ENCODE measurements at regions of chr1 and their contacts with region 1.

Region 1: GRCh38 chr1:110460253-110461220 is 9.6 kb downstream of the PROK1 start:
- DNase-seq: peak; percentile 50
- H3K4me3 ChIP-seq: no peak overlapping the region
- H3K27ac ChIP-seq: no peak overlapping the region
- H3K27me3 ChIP-seq: peaks cover 7% of the 10 kb centered on the region
- CTCF ChIP-seq: peak; percentile 98

Region 2: GRCh38 chr1:110190282-110190929 is 270.1 kb before region 1 on chr1:
- CTCF ChIA-PET with region 1: interaction called, 12 read pairs
- POLR2A ChIA-PET with region 1: no interaction called
- DNase-seq: no peak
- H3K4me3 ChIP-seq: no peak overlapping the region
- H3K27ac ChIP-seq: no peak overlapping the region
- H3K27me3 ChIP-seq: peaks cover 7% of the 10 kb centered on the region
- CTCF ChIP-seq: no peak

Region 3: GRCh38 chr1:110312188-110313121 is 148.1 kb before region 1 on chr1:
- CTCF ChIA-PET with region 1: interaction called, 65 read pairs
- POLR2A ChIA-PET with region 1: no interaction called
- DNase-seq: peak; percentile 51
- H3K4me3 ChIP-seq: no peak overlapping the region
- H3K27ac ChIP-seq: no peak overlapping the region
- H3K27me3 ChIP-seq: no peaks in the 10 kb centered on the region
- CTCF ChIP-seq: peak; percentile 99

Region 4: GRCh38 chr1:110347182-110347893 is 113.2 kb before region 1 on chr1:
- CTCF ChIA-PET with region 1: interaction called, 12 read pairs
- POLR2A ChIA-PET with region 1: no interaction called
- DNase-seq: no peak
- H3K4me3 ChIP-seq: no peak overlapping the region
- H3K27ac ChIP-seq: no peak overlapping the region
- H3K27me3 ChIP-seq: no peaks in the 10 kb centered on the region
- CTCF ChIP-seq: no peak

Region 5: GRCh38 chr1:110412576-110412975 is 48.0 kb before region 1 on chr1:
- CTCF ChIA-PET with region 1: interaction called, 378 read pairs
- POLR2A ChIA-PET with region 1: no interaction called
- DNase-seq: no peak
- H3K4me3 ChIP-seq: no peak overlapping the region
- H3K27ac ChIP-seq: no peak overlapping the region
- H3K27me3 ChIP-seq: peaks cover 6% of the 10 kb centered on the region
- CTCF ChIP-seq: peak; percentile 82

Region 6: GRCh38 chr1:110440877-110441276 is 19.7 kb before region 1 on chr1:
- CTCF ChIA-PET with region 1: interaction called, 13 read pairs
- POLR2A ChIA-PET with region 1: no interaction called
- DNase-seq: no peak
- H3K4me3 ChIP-seq: no peak overlapping the region
- H3K27ac ChIP-seq: no peak overlapping the region
- H3K27me3 ChIP-seq: peaks cover 33% of the 10 kb centered on the region
- CTCF ChIP-seq: no peak

Region 7: DNA sequence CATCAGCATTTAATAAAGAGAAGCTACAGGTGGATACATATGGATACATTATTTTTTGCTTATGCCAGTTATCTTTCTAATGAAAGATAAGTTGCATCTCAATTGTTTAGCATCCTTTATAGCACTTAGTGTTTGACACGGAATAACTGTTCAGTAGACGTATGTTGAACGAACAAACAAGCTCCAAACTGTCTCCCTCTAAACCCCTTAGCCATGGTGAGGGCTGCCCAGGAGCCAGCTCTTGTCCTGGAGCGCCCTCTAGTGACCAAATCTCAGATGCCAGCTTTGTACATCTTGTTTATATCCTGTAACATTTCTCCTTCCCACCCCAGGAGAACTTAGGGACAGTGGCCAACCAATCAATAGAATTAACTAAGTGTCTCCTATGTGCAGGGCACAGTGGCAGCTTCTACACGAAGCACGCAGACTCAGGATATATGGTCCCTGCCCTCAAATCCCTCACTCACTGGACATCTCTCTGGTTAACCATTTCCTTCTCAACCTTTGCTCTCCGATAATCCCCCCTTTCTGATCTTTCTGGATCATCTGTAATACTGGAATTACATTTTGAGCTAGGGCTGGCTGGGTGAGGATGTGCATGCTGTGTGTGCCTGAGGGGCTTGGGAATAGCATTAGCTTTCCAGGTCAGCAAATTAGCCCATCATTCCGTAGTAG is 35.5 kb after region 1 on chr1:
- CTCF ChIA-PET with region 1: interaction called, 281 read pairs
- POLR2A ChIA-PET with region 1: interaction called, 9 read pairs
- DNase-seq: peak; percentile 63
- H3K4me3 ChIP-seq: no peak overlapping the region
- H3K27ac ChIP-seq: no peak overlapping the region
- H3K27me3 ChIP-seq: peaks cover 22% of the 10 kb centered on the region
- CTCF ChIP-seq: peak; percentile 99

Measured in AG04450 (cell line).